Activated T-helper 1 cell treated with anti-CD3 and anti-CD28 coated beads, Interleukin-12 subunit alpha, Interleukin-12 subunit beta, Interleukin-2, Interleukin-4 antibody, amounts not matched to agents 30 ng/mL and 10 ng/mL and 1 ng/mL, durations not matched to agents 14 hours and 24 hours and 36 hours (primary cell): ENCODE measurements at regions of chr2 and their contacts with region 1.

Region 1: DNA sequence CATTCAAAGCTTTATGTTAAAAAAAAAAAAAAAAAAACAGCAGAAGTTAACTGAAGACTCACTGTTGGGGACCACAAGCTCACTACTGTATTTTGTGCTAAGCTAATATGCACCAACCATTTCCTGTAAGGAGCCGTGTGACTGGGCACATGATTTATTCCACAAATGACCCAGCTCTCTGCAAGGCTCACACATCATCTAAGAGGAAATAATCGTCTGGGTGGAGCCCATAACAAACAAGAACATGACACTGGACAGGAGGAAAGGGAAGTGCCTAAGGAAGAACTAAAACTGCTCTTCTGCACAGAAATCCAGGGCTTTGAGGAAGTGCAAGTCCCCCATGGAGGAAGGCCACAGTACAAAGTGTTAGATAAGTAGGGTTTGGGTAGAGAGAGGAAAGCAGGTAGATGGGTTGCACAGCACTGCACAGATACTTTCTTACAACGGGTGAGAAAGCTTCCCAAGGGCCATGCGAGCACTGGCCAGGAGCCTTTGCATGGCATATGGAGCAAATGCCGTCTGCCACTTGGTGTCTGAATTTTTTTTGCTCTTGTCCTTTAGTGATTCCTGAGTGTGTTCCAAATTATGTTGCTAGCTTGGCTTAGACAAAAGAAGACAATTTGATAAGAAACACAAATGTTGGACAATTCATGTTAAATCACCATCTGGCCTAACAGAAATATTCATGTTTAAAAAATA is 24.4 kb downstream of the NFE2L2 start:
- DNase-seq: no peak
- H3K4me3 Mint-ChIP-seq: peak overlapping the region; percentile 56
- H3K27ac Mint-ChIP-seq: peak overlapping the region; percentile 85
- H3K4me1 Mint-ChIP-seq: peaks cover 74% of the 10 kb centered on the region
- H3K27me3 Mint-ChIP-seq: no peaks in the 10 kb centered on the region

Region 2: GRCh38 chr2:176830362-176830761 is 409.7 kb before region 1 on chr2:
- intact Hi-C with region 1: no loop called
- DNase-seq: no peak
- H3K4me3 Mint-ChIP-seq: no peak overlapping the region
- H3K27ac Mint-ChIP-seq: no peak overlapping the region
- H3K4me1 Mint-ChIP-seq: peaks cover 16% of the 10 kb centered on the region
- H3K27me3 Mint-ChIP-seq: peaks cover 10% of the 10 kb centered on the region

Region 3: DNA sequence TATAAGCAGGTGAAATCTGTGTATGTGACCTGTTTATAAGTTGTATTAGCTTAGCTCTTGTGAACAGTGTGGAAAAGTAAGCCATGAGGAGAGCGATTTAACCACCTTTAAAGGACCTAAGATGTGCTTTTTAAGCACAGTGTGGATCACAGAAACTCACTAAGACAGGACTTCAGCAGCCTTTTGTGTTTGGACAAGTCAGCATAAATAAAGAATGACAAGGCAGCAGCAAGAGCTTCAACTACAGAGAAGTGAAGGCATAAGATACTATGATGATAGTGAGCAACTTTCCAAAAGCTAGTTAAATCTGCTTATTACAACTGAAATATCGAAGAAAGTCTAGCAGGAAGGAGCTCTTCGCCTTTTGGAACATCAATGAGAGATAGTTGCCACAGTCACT is 18.5 kb before region 1 on chr2:
- intact Hi-C with region 1: loop called (anchors 2 kb)
- DNase-seq: no peak
- H3K4me3 Mint-ChIP-seq: no peak overlapping the region
- H3K27ac Mint-ChIP-seq: no peak overlapping the region
- H3K4me1 Mint-ChIP-seq: peaks cover 47% of the 10 kb centered on the region
- H3K27me3 Mint-ChIP-seq: no peaks in the 10 kb centered on the region

Region 4: DNA sequence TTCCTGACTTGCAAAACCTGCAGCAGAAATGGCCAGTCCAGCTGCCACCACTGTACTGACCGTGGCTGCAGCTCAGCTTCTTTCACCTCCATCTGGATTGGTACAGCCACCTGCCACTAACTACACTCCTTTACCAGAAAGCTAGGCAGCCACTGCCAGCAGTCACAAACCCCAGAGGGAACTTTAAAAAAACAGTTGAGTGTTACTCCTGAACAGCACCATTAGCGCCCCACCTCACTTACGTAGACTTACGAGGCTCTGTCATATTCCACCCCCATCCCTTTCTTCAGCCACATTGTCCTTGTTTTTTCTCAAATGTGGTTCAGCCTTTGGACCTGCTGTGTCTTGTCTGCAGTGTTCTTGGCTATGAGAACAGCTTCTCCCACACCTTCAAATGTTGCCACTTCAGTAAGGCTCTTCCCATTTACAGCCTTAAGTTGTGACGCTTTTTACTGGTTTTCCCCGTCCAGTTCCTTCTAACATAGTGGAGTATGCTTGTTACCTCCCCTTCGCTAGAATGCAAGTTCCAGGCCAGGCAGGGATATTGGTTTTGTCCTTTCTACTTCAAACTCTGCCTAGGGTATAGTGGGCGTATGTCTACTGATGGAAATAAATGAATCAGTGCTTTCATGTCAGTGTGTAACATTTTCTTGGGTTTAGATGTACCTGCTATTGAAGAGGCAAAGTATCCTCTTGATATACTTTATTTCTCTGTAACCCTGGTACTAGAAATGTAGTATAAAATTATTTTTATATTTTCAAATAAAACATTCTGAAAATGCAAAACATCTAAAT is 10.4 kb before region 1 on chr2:
- intact Hi-C with region 1: loop called (anchors 1 kb)
- DNase-seq: no peak
- H3K4me3 Mint-ChIP-seq: no peak overlapping the region
- H3K27ac Mint-ChIP-seq: peak overlapping the region; percentile 74
- H3K4me1 Mint-ChIP-seq: peaks cover 45% of the 10 kb centered on the region
- H3K27me3 Mint-ChIP-seq: no peaks in the 10 kb centered on the region

Region 5: GRCh38 chr2:177252808-177253531 is 12.9 kb after region 1 on chr2:
- intact Hi-C with region 1: loop called (anchors 1 kb)
- DNase-seq: no peak
- H3K4me3 Mint-ChIP-seq: peak overlapping the region; percentile 63
- H3K27ac Mint-ChIP-seq: peak overlapping the region; percentile 86
- H3K4me1 Mint-ChIP-seq: peaks cover 81% of the 10 kb centered on the region
- H3K27me3 Mint-ChIP-seq: no peaks in the 10 kb centered on the region

Region 6: DNA sequence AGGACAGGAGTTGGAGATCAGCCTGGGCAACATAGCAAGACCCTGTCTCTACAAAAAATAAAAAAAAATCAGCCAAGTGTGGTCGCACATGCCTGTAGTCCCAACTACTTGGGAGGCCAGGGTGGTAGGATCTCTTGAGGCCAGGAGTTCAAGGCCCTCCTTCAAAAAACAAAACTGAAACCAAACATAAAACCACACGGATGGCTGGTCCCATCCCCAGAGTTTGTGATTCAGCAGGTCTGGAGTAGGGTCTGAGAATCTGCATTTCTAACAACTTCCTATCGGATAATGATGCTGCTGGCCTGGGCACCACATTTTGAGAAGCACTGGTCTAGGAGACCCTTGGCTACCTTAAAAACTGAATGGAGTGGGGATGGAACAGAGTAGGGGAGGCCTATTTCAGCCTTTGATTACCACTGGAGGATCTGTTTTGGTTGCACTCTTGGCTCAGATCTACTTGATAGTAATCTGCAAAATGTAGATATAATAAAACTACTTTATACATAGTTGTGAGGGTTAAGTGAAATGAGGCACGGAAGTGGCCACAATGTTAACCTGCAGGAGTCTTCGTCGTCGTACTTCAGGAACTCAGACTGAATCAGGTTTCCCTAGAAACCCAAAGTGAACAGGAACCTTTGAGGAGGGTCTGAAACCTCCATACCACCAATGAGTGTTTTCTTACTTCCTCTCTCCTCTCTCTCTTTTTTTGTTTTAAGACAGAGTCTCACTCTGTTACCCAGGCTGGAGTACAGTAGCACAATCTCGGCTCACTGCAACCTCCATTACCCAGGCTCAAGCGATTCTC is 49.9 kb after region 1 on chr2:
- intact Hi-C with region 1: loop called (anchors 1 kb)
- DNase-seq: peak; percentile 5
- H3K4me3 Mint-ChIP-seq: peak overlapping the region; percentile 63
- H3K27ac Mint-ChIP-seq: peak overlapping the region; percentile 85
- H3K4me1 Mint-ChIP-seq: peaks cover 75% of the 10 kb centered on the region
- H3K27me3 Mint-ChIP-seq: peaks cover 2% of the 10 kb centered on the region

Region 7: DNA sequence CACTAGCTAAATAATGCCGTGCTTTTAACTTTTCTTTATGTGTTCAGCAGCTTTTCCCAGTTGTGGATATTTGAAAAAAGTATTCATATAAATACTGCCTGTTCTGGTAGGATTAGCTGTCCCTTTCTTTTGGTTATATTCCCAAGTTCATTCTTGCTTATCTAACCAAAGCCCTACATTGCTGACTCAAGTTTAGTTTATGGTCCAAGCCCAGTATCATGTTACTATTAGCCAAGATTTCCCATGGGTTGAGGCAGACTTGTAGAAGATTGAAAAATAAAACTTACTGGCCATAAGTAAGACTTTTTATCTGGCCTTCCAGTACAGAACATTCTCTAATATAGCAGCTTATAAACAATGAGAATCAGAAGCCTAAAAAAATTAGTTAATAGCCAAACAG is 74.1 kb after region 1 on chr2:
- intact Hi-C with region 1: no loop called
- DNase-seq: no peak
- H3K4me3 Mint-ChIP-seq: no peak overlapping the region
- H3K27ac Mint-ChIP-seq: no peak overlapping the region
- H3K4me1 Mint-ChIP-seq: peaks cover 9% of the 10 kb centered on the region
- H3K27me3 Mint-ChIP-seq: peaks cover 3% of the 10 kb centered on the region